ENCODE measurements at regions of chr12 and their contacts with region 1.

Region 1: DNA sequence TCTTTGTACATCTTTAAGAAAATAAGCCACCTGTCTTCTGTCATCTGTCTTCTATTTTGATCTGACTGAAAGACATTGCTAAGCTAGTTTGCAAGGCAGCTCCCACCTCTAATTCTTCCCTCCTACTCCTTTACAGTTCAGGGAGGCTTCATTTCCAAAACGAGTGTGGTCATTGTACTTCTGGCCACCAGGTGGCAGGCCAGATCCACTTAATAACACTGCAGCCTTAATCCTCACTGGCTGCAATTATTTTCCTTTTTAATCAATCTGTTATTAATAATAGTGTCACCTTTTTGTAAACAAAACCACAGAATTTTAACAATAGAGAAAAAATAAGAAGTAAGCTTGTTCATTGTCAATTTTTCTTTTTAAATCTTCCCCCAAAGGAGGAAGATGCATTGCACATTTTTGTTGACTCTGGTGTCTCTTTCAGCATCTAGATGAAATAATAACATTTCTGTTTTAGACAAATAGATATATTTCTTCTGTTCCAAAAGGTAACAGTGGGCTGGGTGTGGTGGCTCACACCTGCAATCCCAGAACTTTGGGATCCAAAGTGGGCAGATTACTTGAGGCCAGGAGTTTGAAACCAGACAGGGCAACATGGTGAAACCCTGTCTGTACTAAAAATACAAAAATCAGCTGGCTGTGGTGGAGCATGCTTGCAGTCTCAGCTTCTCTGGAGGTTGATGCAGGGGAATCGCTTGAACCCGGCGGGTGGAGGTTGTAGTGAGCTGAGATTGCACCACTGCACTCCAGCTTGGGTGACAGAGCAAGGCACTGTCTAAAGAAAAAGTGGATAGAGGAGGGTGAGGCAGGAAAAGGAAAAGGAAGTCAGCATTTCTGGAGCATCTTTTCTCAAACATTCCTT is 23.3 kb downstream of the GABARAPL1 start:
- DNase-seq: peak; percentile 55
- ATAC-seq: peak; percentile 73
- H3K4me3 ChIP-seq: no peak overlapping the region
- H3K27ac ChIP-seq: peak overlapping the region; percentile 4; the same call in 1 of the 2 replicates
- H3K4me1 ChIP-seq: peaks cover 12% of the 10 kb centered on the region
- H3K27me3 ChIP-seq: no peaks in the 10 kb centered on the region
- CTCF ChIP-seq: peak; percentile 86

Region 2: DNA sequence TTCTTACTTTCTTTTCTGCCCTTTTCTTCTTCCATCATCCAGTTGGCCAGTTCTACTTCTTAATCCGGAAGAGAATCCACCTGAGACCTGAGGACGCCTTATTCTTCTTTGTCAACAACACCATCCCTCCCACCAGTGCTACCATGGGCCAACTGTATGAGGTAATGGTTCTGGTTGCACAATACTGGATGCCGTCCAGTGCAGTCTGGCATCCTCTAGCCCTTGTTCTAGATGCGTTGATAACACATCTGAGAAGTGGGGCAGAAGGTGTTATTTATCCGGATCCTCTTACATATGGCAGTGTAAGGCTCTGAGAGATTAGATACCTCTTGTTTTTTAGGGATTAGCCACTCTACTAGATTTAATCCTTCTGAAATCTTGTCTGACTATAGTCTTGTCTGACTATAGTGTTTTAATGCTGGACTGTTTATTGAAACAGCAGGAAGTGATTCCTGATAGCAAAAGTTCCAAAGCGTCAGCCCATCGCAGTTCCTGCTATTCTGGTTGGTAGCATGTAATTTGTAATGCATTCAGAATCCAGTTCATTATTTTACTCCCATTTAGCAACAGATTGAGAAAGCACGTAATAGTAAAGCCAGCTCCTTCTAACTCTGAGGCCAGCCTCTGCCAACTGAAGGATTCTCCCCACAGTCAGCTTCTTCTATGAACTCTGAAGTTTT is 15.5 kb before region 1 on chr12:
- CTCF ChIA-PET with region 1: no interaction called
- POLR2A ChIA-PET with region 1: no interaction called
- intact Hi-C with region 1: no loop called
- DNase-seq: peak; percentile 18
- ATAC-seq: no peak
- H3K4me3 ChIP-seq: no peak overlapping the region
- H3K27ac ChIP-seq: no peak overlapping the region
- H3K4me1 ChIP-seq: peaks cover 1% of the 10 kb centered on the region; the same call in 1 of the 2 replicates
- H3K27me3 ChIP-seq: no peaks in the 10 kb centered on the region
- CTCF ChIP-seq: no peak

Region 3: GRCh38 chr12:10304161-10304574 is 68.2 kb after region 1 on chr12:
- CTCF ChIA-PET with region 1: no interaction called
- POLR2A ChIA-PET with region 1: interaction called, 3 read pairs
- intact Hi-C with region 1: loop called (anchors 5 kb)
- DNase-seq: peak; percentile 84
- ATAC-seq: peak; percentile 97
- H3K4me3 ChIP-seq: no peak overlapping the region
- H3K27ac ChIP-seq: 0 out of 2 replicates have a peak overlapping the region, but pooled peaks have one; percentile 19
- H3K4me1 ChIP-seq: peaks cover 6% of the 10 kb centered on the region; the same call in 1 of the 2 replicates
- H3K27me3 ChIP-seq: no peaks in the 10 kb centered on the region
- CTCF ChIP-seq: no peak

Region 4: DNA sequence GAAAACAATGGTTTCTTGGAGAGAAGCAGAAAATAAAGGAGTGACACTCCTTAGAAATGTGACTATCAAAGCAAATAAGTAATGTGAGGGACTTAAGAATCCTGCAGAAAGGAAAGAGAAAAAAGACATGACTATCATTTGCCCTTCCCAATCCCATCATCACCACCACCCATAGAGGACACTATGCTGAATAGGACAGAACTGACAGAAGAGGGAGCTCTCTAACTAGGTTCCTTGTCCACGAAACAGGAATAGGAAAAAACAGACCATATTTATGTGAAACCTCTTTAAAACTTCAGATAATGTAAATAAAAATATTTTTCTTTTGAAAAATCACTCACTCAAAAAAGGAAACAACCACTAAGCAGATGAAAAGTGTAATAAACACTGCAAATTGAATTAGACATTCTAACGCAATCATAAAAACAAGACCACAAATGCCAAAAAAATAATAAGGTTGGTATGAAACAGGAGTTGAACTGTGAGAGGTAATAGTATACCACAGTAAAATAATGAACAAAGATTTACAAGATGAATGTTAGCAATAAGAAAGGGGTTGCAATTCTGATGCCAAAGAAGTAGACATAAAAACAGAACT is 95.7 kb after region 1 on chr12:
- CTCF ChIA-PET with region 1: no interaction called
- POLR2A ChIA-PET with region 1: no interaction called
- intact Hi-C with region 1: loop called (anchors 5 kb)
- DNase-seq: peak; percentile 67
- ATAC-seq: peak; percentile 81
- H3K4me3 ChIP-seq: no peak overlapping the region
- H3K27ac ChIP-seq: no peak overlapping the region
- H3K4me1 ChIP-seq: 0 out of 2 replicates have a peak, but pooled peaks cover 2% of the 10 kb centered on the region
- H3K27me3 ChIP-seq: no peaks in the 10 kb centered on the region
- CTCF ChIP-seq: peak; percentile 83

Region 5: DNA sequence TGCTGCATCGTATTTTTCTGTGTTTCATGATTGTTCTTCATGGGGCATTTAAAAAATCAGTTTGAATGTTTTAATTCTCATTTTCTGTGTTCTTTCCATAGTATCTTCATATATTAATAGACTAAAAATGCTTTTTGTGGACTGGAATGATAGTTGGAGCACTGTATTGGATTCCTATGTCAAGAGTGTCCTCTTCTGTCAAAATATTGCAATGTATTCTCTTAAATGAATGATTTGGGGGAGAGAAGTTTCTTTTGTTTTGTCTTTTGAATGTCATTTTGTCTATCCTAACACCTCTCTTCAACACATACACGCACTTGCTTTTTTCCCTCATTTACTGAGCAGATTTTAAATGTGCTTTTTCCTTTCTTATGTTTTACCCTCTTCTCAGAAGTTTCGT is 265.0 kb after region 1 on chr12:
- CTCF ChIA-PET with region 1: no interaction called
- POLR2A ChIA-PET with region 1: no interaction called
- intact Hi-C with region 1: loop called (anchors 1 kb)
- DNase-seq: peak; percentile 25
- ATAC-seq: no peak
- H3K4me3 ChIP-seq: no peak overlapping the region
- H3K27ac ChIP-seq: no peak overlapping the region
- H3K4me1 ChIP-seq: no peaks in the 10 kb centered on the region
- H3K27me3 ChIP-seq: no peaks in the 10 kb centered on the region
- CTCF ChIP-seq: peak; percentile 47

Region 6: DNA sequence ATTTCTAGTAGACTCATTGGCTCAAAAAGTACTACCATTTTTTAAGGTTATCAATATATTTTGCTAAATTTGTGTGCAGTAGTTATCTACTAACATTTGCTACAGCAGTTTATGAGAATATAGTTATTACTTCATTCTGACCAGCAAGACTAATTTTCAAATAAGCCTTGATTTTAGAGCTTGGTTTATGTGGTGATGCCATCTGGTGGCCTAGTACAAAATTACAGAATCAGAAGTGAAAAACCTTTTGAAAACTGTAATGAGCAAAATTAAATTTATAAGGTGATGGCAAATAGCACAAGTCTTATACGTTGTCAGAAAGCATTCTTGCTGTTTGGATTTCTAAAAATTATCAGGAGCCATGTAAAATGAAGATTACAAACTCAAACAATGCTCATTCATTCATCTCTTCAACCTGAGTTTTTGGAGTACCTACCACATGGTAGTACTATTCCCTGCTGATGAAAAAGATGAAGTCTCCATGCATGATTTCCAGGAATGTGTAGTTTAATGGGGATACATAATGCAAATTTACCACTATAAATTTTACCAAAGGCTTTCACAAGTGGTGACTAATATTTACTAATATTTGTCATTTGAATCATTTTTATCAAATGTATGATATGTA is 326.4 kb after region 1 on chr12:
- CTCF ChIA-PET with region 1: interaction called, 3 read pairs
- POLR2A ChIA-PET with region 1: no interaction called
- intact Hi-C with region 1: loop called (anchors 1 kb)
- DNase-seq: peak; percentile 87
- ATAC-seq: peak; percentile 88
- H3K4me3 ChIP-seq: no peak overlapping the region
- H3K27ac ChIP-seq: peak overlapping the region; percentile 84
- H3K4me1 ChIP-seq: peaks cover 15% of the 10 kb centered on the region
- H3K27me3 ChIP-seq: no peaks in the 10 kb centered on the region
- CTCF ChIP-seq: peak; percentile 77

Region 7: GRCh38 chr12:10673660-10674384 is 437.8 kb after region 1 on chr12 and contains the start of gene STYK1:
- CTCF ChIA-PET with region 1: no interaction called
- POLR2A ChIA-PET with region 1: no interaction called
- intact Hi-C with region 1: loop called (anchors 2 kb)
- DNase-seq: peak; percentile 89
- ATAC-seq: peak; percentile 86
- H3K4me3 ChIP-seq: peak within 1 kb of the TSS; percentile 80
- H3K27ac ChIP-seq: peak within 1 kb of the TSS; percentile 86
- H3K4me1 ChIP-seq: peaks cover 15% of the 10 kb centered on the region; the same call in 1 of the 2 replicates
- H3K27me3 ChIP-seq: no peaks in the 10 kb centered on the region
- CTCF ChIP-seq: peak; percentile 90
- total RNA-seq, gene STYK1: 4.3 and 8.6 TPM in 2 replicates

Measured in PC-3 (cell line).